ENCODE measurements at regions of chr10 and their contacts with region 1.

Region 1: GRCh38 chr10:68897336-68897741 is 3.8 kb upstream of the DDX50 start:
- DNase-seq: no peak

Region 2: GRCh38 chr10:68792115-68792514 is 105.2 kb before region 1 on chr10:
- intact Hi-C with region 1: loop called in 1 of 2 experiments (anchors 10 kb)
- DNase-seq: no peak

Region 3: DNA sequence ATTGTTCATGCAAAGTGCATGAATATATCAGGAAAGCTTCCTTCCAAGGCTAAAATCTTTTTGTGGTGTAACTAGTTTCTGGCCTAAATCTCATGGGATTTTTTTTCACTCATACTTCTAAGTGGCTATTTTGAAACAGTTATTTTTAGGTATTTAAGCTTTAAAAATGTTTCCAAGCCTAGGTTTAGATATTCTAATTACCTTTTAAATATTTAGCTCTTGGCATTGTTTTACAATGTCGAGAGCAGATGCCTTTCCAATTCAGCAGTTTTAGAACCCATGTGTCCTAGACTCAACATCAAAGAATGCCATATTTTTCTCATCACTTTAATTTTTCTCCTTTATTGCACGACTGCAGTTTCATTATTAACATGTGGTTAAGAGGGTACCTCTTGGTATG is 97.1 kb before region 1 on chr10:
- intact Hi-C with region 1: loop called (anchors 10 kb)
- DNase-seq: no peak

Region 4: GRCh38 chr10:68848793-68849192 is 48.5 kb before region 1 on chr10:
- intact Hi-C with region 1: no loop called
- DNase-seq: no peak

Region 5: GRCh38 chr10:69567920-69568319 is 670.6 kb after region 1 on chr10:
- intact Hi-C with region 1: loop called in 1 of 2 experiments (anchors 5 kb)
- DNase-seq: peak; percentile 88